ENCODE measurements at regions of chr1 and their contacts with region 1.

Region 1: DNA sequence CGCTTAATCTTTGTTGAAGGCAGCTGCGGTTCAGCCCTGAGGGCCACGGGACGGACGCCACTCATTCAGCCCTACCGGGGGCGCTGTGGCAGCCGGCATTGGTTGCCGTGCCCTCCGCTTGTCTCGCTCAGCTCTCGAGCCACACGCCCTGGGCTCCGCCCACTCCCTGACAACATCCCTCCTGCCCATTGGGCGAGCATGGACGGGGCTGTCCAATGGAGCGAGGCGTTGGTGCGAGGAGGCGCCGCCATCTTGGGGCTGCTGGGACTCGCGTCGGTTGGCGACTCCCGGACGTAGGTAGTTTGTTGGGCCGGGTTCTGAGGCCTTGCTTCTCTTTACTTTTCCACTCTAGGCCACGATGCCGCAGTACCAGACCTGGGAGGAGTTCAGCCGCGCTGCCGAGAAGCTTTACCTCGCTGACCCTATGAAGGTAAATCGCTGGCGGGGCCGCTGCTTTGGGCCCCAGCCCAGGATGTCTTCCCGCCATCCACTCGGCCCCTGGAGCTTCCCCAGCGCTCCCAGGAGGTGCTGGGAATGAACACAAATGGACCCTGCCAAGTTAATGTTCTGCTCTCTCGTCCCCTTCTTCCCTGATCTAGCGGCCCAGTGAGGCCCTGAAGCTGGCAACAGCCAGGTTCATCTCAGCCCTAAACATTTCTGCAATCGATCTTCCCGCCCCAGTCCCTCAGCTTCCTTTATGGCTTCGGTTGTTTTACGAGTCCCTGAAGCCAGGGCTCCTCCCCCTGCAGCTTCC is at the start of gene SRP9:
- DNase-seq: peak; percentile 98 to 100 (median 99)
- ATAC-seq: peak; percentile 90
- H3K4me3 ChIP-seq: peak within 1 kb of the TSS; percentile 68
- H3K4me3 Mint-ChIP-seq: no peak within 1 kb of the TSS
- H3K27ac ChIP-seq: peak within 1 kb of the TSS; percentile 95 to 97
- H3K27ac Mint-ChIP-seq: no peak within 1 kb of the TSS
- H3K4me1 ChIP-seq: peaks cover 42% of the 10 kb centered on the region
- H3K4me1 Mint-ChIP-seq: peaks cover 15% of the 10 kb centered on the region
- H3K27me3 ChIP-seq: no peaks in the 10 kb centered on the region
- H3K27me3 Mint-ChIP-seq: no peaks in the 10 kb centered on the region
- CTCF ChIP-seq: peak; percentile 86
- total RNA-seq, gene SRP9: 63.7 to 69.8 TPM

Region 2: DNA sequence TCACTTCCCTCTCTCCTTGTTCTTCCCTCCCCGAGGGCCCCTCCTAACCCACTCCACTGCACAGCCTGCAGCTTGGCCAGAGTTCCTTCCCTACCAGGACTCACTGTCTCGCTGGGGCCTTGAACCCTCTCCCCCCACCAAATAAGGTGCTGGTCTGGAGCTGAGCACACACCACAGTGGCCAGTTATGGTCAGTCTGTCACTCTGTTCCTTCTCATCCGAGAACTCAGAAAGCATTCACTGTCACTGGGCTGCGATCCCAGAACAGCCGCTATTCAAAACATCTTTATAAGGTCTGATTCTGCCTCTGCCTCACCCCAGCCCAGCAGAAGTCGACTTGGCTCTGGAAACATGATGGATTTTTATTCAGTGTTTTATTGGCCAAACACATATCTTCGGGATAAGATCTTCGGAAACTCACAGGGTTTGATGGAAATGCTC is 330.1 kb before region 1 on chr1:
- CTCF ChIA-PET with region 1: no interaction called
- POLR2A ChIA-PET with region 1: interaction called, 31 read pairs
- intact Hi-C with region 1: no loop called
- DNase-seq: no peak
- ATAC-seq: no peak
- H3K4me3 ChIP-seq: no peak overlapping the region
- H3K4me3 Mint-ChIP-seq: no peak overlapping the region
- H3K27ac ChIP-seq: no peak overlapping the region
- H3K27ac Mint-ChIP-seq: peak overlapping the region; percentile 51
- H3K4me1 ChIP-seq: peaks cover 59% of the 10 kb centered on the region
- H3K4me1 Mint-ChIP-seq: peaks cover 49% of the 10 kb centered on the region
- H3K27me3 ChIP-seq: no peaks in the 10 kb centered on the region
- H3K27me3 Mint-ChIP-seq: no peaks in the 10 kb centered on the region
- CTCF ChIP-seq: no peak

Region 3: GRCh38 chr1:225766967-225767633 is 10.7 kb before region 1 on chr1:
- CTCF ChIA-PET with region 1: interaction called, 6 read pairs
- POLR2A ChIA-PET with region 1: interaction called, 16 read pairs
- intact Hi-C with region 1: no loop called
- DNase-seq: no peak
- ATAC-seq: no peak
- H3K4me3 ChIP-seq: no peak overlapping the region
- H3K4me3 Mint-ChIP-seq: no peak overlapping the region
- H3K27ac ChIP-seq: no peak overlapping the region
- H3K27ac Mint-ChIP-seq: no peak overlapping the region
- H3K4me1 ChIP-seq: no peaks in the 10 kb centered on the region
- H3K4me1 Mint-ChIP-seq: no peaks in the 10 kb centered on the region
- H3K27me3 ChIP-seq: peaks cover 1 to 4% of the 10 kb centered on the region in 2 experiments
- H3K27me3 Mint-ChIP-seq: peaks cover 3% of the 10 kb centered on the region
- CTCF ChIP-seq: no peak

Region 4: GRCh38 chr1:225845571-225846259 is 68.0 kb after region 1 on chr1:
- CTCF ChIA-PET with region 1: no interaction called
- POLR2A ChIA-PET with region 1: interaction called, 23 read pairs
- intact Hi-C with region 1: loop called in 1 of 2 experiments (anchors 5 kb)
- DNase-seq: peak in 8 of 14 experiments; percentile 16 to 66 (median 35)
- ATAC-seq: no peak
- H3K4me3 ChIP-seq: no peak overlapping the region
- H3K4me3 Mint-ChIP-seq: no peak overlapping the region
- H3K27ac ChIP-seq: no peak overlapping the region
- H3K27ac Mint-ChIP-seq: peak overlapping the region; percentile 96
- H3K4me1 ChIP-seq: peaks cover 40% of the 10 kb centered on the region
- H3K4me1 Mint-ChIP-seq: peaks cover 58% of the 10 kb centered on the region
- H3K27me3 ChIP-seq: no peaks in the 10 kb centered on the region
- H3K27me3 Mint-ChIP-seq: no peaks in the 10 kb centered on the region
- CTCF ChIP-seq: peak; percentile 35

Region 5: DNA sequence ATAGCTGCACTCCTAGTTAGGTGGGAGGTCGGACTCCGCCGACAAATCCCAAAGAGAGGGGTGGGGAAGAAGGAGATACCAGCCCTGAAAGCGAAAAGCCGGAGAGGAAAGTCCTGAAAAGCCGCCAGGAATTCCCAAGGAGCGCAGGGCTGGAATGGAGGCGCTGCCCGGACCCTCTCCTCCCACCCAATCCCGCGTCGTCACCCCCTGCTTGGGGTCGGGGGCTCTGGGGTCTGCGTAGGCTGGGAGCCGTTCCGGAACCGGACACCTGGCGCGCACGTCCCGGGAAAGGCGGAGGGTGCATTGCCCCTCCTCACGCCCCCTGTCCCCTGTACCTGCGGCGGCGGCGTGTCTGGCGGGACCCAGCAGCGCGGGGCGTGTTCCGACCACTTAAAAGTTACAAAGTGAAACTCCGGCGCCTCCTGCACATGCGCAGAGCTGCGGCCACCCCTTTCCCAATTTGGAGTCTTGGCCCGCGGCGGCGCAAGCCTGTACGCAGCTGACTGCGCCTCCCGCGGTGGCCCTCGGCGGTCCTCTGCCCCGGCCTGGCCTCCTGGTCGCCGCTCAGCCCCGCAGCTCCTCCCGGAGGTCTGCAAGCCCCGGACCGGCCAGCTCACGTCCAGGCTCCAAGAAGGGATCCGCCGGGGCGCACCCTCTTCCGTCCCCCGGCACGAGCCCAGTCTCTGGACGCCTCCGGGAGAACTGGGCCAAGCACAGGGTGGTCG is 104.4 kb after region 1 on chr1 and contains the start of gene TMEM63A:
- CTCF ChIA-PET with region 1: interaction called, 20 read pairs
- POLR2A ChIA-PET with region 1: interaction called, 98 read pairs
- intact Hi-C with region 1: loop called in 1 of 2 experiments (anchors 2 kb)
- DNase-seq: peak; percentile 85 to 95 (median 91)
- ATAC-seq: peak; percentile 64
- H3K4me3 ChIP-seq: peak within 1 kb of the TSS; percentile 74
- H3K4me3 Mint-ChIP-seq: peak within 1 kb of the TSS; percentile 97
- H3K27ac ChIP-seq: peak within 1 kb of the TSS; percentile 87 to 89
- H3K27ac Mint-ChIP-seq: peak within 1 kb of the TSS; percentile 86
- H3K4me1 ChIP-seq: peaks cover 56% of the 10 kb centered on the region
- H3K4me1 Mint-ChIP-seq: peaks cover 47% of the 10 kb centered on the region
- H3K27me3 ChIP-seq: no peaks in the 10 kb centered on the region
- H3K27me3 Mint-ChIP-seq: no peaks in the 10 kb centered on the region
- CTCF ChIP-seq: peak; percentile 33
- total RNA-seq, gene TMEM63A: 199 to 204 TPM

Region 6: DNA sequence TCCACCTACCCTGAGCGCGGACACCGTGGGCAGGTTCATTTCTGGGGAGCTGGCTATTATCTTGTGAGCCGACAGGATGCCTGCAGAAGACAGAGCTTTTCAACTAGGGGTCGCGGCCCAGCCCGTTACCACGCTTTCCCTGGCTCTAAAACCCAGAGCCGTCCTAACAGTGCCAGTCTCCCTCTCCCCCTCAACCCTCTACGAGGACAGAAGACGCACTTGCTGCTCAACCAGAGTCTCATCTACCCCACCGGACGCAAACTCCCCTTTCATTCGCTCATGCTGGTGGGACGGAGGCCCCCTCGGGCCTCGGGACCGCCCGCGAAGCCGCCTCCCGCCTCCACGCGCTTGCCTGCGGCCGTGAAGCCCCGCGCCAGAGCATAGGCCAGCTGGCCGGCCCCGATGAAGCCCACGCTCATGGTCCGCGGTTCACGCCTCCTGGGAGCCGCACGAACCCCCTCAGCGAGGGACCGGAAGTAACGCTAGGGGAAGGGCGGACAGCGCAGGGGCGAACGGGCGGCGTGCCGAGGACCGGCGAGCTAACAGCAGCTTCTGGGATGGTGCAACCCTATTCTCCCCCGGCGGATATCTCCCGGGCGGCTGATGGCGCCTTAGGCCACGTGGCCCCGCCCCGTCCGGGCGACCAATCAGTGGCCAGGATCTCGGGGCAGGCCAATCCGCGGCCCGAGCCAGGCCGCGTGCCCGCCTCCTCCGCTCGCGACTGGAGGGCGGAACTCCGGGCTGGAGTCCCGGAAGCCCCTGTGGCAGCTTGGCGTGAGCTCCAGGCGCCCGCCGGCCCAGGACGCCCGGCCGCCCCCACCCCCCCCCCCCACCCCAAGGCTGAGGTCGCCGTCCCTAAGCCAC is 146.2 kb after region 1 on chr1 and contains the start of gene PYCR2:
- CTCF ChIA-PET with region 1: interaction called, 9 read pairs
- POLR2A ChIA-PET with region 1: interaction called, 54 read pairs
- intact Hi-C with region 1: loop called in 1 of 2 experiments (anchors 1 kb)
- DNase-seq: peak; percentile 87 to 98 (median 93)
- ATAC-seq: peak; percentile 98
- H3K4me3 ChIP-seq: peak within 1 kb of the TSS; percentile 95
- H3K4me3 Mint-ChIP-seq: peak within 1 kb of the TSS; percentile 95
- H3K27ac ChIP-seq: peak within 1 kb of the TSS; percentile 79 to 89
- H3K27ac Mint-ChIP-seq: peak within 1 kb of the TSS; percentile 98
- H3K4me1 ChIP-seq: peaks cover 74% of the 10 kb centered on the region
- H3K4me1 Mint-ChIP-seq: peaks cover 54% of the 10 kb centered on the region
- H3K27me3 ChIP-seq: no peaks in the 10 kb centered on the region
- H3K27me3 Mint-ChIP-seq: no peaks in the 10 kb centered on the region
- CTCF ChIP-seq: no peak
- total RNA-seq, gene PYCR2: 24.1 to 26.2 TPM

Measured in CD4-positive, alpha-beta T cell (primary cell).